GM13976 (cell line): ENCODE measurements at regions of chr1 and their contacts with region 1.

Region 1: DNA sequence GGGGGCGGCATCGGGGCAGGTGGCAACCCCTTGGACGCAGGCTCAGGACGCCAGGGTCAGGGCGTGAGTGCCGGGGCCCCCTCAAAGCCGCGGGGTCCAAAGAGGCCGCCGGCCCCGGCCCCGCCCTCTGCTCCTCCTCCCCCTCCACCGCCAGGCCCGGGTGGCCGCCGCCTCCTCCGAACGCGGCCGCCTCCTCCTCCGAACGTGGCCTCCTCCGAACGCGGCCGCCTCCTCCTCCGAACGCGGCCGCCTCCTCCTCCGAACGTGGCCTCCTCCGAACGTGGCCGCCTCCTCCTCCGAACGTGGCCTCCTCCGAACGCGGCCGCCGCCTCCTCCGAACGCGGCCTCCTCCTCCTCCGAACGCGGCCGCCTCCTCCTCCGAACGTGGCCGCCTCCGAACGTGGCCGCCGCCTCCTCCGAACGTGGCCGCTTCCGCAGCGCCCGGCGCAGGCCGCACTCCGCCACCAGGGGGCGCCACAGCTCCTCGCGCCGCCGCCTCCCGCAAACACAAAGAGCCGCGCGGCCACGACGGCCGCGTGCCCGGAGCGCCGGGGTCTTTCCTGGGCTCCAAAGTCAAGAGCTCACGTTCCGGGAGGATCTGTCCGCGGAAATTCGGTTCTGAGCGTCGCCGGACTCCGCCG is 19.3 kb upstream of the SAMD11 start:
- DNase-seq: peak; percentile 94
- CTCF ChIP-seq: peak; percentile 99

Region 2: GRCh38 chr1:960040-960756 is 55.8 kb after region 1 on chr1 and contains the start of gene KLHL17:
- in situ Hi-C with region 1: loop called (anchors 10 kb)
- DNase-seq: peak; percentile 91
- CTCF ChIP-seq: no peak

Region 3: GRCh38 chr1:1273512-1274298 is 369.3 kb after region 1 on chr1 and contains the start of gene UBE2J2:
- in situ Hi-C with region 1: loop called (anchors 25 kb)
- DNase-seq: peak; percentile 100
- CTCF ChIP-seq: no peak